B cell (primary cell): ENCODE measurements at regions of chr19 and their contacts with region 1.

Region 1: GRCh38 chr19:2636897-2637683 is 65.4 kb downstream of the GNG7 start:
- DNase-seq: peak; percentile 85
- ATAC-seq: peak; percentile 74
- H3K4me3 ChIP-seq: no peak overlapping the region
- H3K4me3 Mint-ChIP-seq: peak overlapping the region; percentile 47
- H3K27ac ChIP-seq: no peak overlapping the region
- H3K27ac Mint-ChIP-seq: peak overlapping the region; percentile 74
- H3K4me1 ChIP-seq: peaks cover 52 to 74% of the 10 kb centered on the region in 2 donors
- H3K4me1 Mint-ChIP-seq: peaks cover 81% of the 10 kb centered on the region
- H3K27me3 ChIP-seq: no peaks in the 10 kb centered on the region
- H3K27me3 Mint-ChIP-seq: no peaks in the 10 kb centered on the region
- CTCF ChIP-seq: peak; percentile 71

Region 2: DNA sequence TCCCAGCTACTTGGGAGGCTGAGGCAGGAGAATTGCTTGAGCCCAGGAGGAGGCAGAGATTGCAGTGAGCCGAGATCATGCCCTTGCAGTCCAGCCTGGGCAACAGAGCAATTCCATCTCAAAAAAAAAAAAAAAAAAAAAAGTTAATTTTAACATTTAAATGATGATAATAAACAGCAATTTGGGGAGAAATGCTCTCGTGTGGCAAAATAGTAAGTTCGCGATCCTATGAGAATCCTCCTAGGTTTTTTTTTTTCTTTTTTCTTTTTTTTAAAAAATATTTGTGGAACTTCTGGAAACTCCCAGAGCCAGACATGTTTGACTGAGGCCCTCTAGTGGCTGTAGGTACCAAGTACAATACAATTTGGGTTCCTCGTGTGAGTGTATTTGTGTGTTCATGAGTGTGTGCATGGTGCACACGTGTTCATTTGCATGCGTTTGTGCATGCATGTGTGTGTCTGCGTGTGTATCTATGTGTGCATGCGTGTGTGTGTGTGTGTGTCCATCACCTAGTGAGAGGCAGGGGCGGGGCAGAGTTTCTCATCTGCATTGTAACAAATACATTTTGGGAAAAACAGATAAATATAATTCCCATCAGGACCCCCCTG is 245.9 kb before region 1 on chr19:
- CTCF ChIA-PET with region 1: interaction called, 12 read pairs
- POLR2A ChIA-PET with region 1: no interaction called
- intact Hi-C with region 1: no loop called
- DNase-seq: peak; percentile 82
- ATAC-seq: peak; percentile 51
- H3K4me3 ChIP-seq: no peak overlapping the region
- H3K4me3 Mint-ChIP-seq: peak overlapping the region; percentile 61
- H3K27ac ChIP-seq: no peak overlapping the region
- H3K27ac Mint-ChIP-seq: peak overlapping the region; percentile 70
- H3K4me1 ChIP-seq: peaks cover 16 to 31% of the 10 kb centered on the region in 2 donors
- H3K4me1 Mint-ChIP-seq: peaks cover 32% of the 10 kb centered on the region
- H3K27me3 ChIP-seq: no peaks in the 10 kb centered on the region
- H3K27me3 Mint-ChIP-seq: no peaks in the 10 kb centered on the region
- CTCF ChIP-seq: peak; percentile 92

Region 3: GRCh38 chr19:2552859-2553258 is 84.2 kb before region 1 on chr19:
- CTCF ChIA-PET with region 1: interaction called, 13 read pairs
- POLR2A ChIA-PET with region 1: no interaction called
- intact Hi-C with region 1: no loop called
- DNase-seq: peak; percentile 88
- ATAC-seq: peak; percentile 92
- H3K4me3 ChIP-seq: peak overlapping the region in 3 of 5 experiments; percentile 21 to 55 (median 29)
- H3K4me3 Mint-ChIP-seq: peak overlapping the region; percentile 75
- H3K27ac ChIP-seq: peak overlapping the region; percentile 46 to 73
- H3K27ac Mint-ChIP-seq: peak overlapping the region; percentile 69
- H3K4me1 ChIP-seq: peaks cover 8 to 15% of the 10 kb centered on the region in 2 donors
- H3K4me1 Mint-ChIP-seq: peaks cover 23% of the 10 kb centered on the region
- H3K27me3 ChIP-seq: no peaks in the 10 kb centered on the region
- H3K27me3 Mint-ChIP-seq: no peaks in the 10 kb centered on the region
- CTCF ChIP-seq: no peak

Region 4: GRCh38 chr19:2561895-2562294 is 75.2 kb before region 1 on chr19:
- CTCF ChIA-PET with region 1: interaction called, 12 read pairs
- POLR2A ChIA-PET with region 1: no interaction called
- intact Hi-C with region 1: no loop called
- DNase-seq: peak; percentile 82
- ATAC-seq: peak; percentile 94
- H3K4me3 ChIP-seq: peak overlapping the region in 4 of 5 experiments; percentile 42 to 63 (median 56)
- H3K4me3 Mint-ChIP-seq: peak overlapping the region; percentile 89
- H3K27ac ChIP-seq: peak overlapping the region; percentile 65 to 81
- H3K27ac Mint-ChIP-seq: peak overlapping the region; percentile 91
- H3K4me1 ChIP-seq: peaks cover 16 to 33% of the 10 kb centered on the region in 2 donors
- H3K4me1 Mint-ChIP-seq: peaks cover 45% of the 10 kb centered on the region
- H3K27me3 ChIP-seq: no peaks in the 10 kb centered on the region
- H3K27me3 Mint-ChIP-seq: no peaks in the 10 kb centered on the region
- CTCF ChIP-seq: no peak